ENCODE measurements at regions of chr15 and their contacts with region 1.

Region 1: GRCh38 chr15:44501768-44502366 is 35.1 kb upstream of the EIF3J start:
- DNase-seq: no peak
- H3K4me3 Mint-ChIP-seq: no peak overlapping the region
- H3K27ac Mint-ChIP-seq: no peak overlapping the region
- H3K4me1 Mint-ChIP-seq: peaks cover 22% of the 10 kb centered on the region
- H3K27me3 Mint-ChIP-seq: no peaks in the 10 kb centered on the region

Region 2: GRCh38 chr15:44286814-44287452 is 214.9 kb before region 1 on chr15:
- intact Hi-C with region 1: loop called (anchors 5 kb)
- DNase-seq: no peak
- H3K4me3 Mint-ChIP-seq: peak overlapping the region; percentile 92
- H3K27ac Mint-ChIP-seq: peak overlapping the region; percentile 100
- H3K4me1 Mint-ChIP-seq: peaks cover 44% of the 10 kb centered on the region
- H3K27me3 Mint-ChIP-seq: peaks cover 9% of the 10 kb centered on the region